Activated CD8-positive, alpha-beta T cell treated with anti-CD3 and anti-CD28 coated beads for 36 hours (primary cell): ENCODE measurements at regions of chr17 and their contacts with region 1.

Region 1: GRCh38 chr17:79855331-79856124 is 16.3 kb upstream of the CBX4 start:
- DNase-seq: no peak
- ATAC-seq: no peak
- H3K4me3 Mint-ChIP-seq: no peak overlapping the region
- H3K27ac Mint-ChIP-seq: no peak overlapping the region
- H3K4me1 Mint-ChIP-seq: peaks cover 2% of the 10 kb centered on the region
- H3K27me3 Mint-ChIP-seq: peaks cover 4% of the 10 kb centered on the region
- CTCF ChIP-seq: no peak

Region 2: DNA sequence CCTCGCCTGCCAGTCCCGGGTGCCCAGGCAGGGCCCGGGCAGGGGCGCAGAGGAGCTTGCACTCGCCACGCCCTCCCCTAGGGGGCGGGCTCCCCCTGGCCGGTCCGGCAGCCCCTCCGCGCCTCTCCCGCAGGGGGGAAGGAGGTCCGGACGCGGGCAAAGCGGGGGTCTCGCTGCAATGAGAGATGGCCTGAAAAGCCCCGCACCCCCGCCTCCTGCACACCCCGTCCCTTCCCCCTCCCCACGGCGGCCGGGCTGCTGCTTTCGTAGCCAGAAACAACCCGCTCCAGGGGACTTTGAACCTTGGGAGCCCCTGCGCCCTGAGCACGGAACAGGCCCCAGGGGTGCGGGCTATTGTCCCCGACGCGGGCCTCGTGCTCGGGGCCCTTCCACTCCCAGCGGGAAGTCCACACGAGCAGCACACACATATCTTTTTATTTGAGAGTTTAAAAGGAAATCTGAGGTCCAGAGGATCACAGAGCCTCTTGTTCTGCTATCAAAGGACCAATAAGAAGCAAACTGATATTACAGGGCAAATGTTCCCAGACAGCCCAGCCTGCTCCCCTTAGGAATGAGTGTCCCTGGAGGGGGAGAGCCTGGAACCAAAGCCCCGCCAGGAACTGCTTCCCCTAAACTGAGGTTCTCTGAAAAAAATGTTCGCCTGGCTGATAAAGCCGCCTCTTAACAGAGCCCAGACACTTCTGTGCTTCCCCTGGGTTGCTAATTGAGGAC is 10.5 kb before region 1 on chr17:
- CTCF ChIA-PET with region 1: interaction called, 13 read pairs
- POLR2A ChIA-PET with region 1: interaction called, 4 read pairs
- intact Hi-C with region 1: no loop called
- DNase-seq: peak; percentile 57
- ATAC-seq: peak; percentile 70
- H3K4me3 Mint-ChIP-seq: no peak overlapping the region
- H3K27ac Mint-ChIP-seq: no peak overlapping the region
- H3K4me1 Mint-ChIP-seq: peaks cover 23% of the 10 kb centered on the region
- H3K27me3 Mint-ChIP-seq: peaks cover 43% of the 10 kb centered on the region
- CTCF ChIP-seq: peak; percentile 92